ENCODE measurements at regions of chr2 and their contacts with region 1.

Region 1: GRCh38 chr2:234278556-234279255 is 218.2 kb downstream of the ARL4C start:
- DNase-seq: peak; percentile 31
- H3K4me3 Mint-ChIP-seq: peak overlapping the region; percentile 13
- H3K27ac Mint-ChIP-seq: peak overlapping the region; percentile 82
- H3K4me1 Mint-ChIP-seq: peaks cover 47% of the 10 kb centered on the region
- H3K27me3 Mint-ChIP-seq: no peaks in the 10 kb centered on the region

Region 2: DNA sequence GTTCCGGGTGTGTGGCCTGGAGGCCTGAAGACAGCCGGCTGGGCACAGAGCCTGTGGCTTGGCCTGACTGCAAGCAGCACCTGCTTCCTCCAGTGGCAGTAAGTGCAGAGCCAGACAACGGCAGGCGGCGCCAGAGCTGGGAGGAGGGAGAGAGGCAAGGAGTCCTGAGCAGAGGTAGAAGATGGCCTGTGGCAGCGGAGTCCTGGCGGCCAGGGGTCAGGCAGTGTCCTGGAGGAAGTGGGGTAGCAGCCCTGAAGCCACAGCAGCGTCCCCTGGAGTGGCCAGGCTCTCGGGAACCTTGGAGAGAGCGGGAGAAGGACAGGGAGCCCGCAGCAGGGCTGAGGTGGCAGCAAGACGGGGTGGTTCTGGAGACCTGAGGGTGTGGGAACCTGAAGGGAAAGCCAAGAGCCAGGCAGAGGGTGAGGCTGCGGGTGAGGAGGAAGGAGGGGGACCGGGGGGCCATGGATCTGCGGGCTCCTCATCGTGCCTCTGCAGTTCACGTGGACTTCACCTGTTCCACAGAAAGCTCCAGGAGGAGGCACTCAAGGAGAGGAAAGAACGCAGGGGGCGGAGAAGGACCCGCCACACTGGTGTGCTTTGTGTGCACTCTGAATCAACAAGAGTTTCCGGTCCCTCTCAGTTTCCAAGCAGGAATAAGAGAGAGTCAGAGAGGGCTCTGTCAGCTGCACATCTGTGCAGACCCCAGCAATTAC is 798.1 kb before region 1 on chr2:
- CTCF ChIA-PET with region 1: no interaction called
- POLR2A ChIA-PET with region 1: no interaction called
- intact Hi-C with region 1: no loop called
- DNase-seq: no peak
- H3K4me3 Mint-ChIP-seq: no peak overlapping the region
- H3K27ac Mint-ChIP-seq: no peak overlapping the region
- H3K4me1 Mint-ChIP-seq: no peaks in the 10 kb centered on the region
- H3K27me3 Mint-ChIP-seq: no peaks in the 10 kb centered on the region

Region 3: DNA sequence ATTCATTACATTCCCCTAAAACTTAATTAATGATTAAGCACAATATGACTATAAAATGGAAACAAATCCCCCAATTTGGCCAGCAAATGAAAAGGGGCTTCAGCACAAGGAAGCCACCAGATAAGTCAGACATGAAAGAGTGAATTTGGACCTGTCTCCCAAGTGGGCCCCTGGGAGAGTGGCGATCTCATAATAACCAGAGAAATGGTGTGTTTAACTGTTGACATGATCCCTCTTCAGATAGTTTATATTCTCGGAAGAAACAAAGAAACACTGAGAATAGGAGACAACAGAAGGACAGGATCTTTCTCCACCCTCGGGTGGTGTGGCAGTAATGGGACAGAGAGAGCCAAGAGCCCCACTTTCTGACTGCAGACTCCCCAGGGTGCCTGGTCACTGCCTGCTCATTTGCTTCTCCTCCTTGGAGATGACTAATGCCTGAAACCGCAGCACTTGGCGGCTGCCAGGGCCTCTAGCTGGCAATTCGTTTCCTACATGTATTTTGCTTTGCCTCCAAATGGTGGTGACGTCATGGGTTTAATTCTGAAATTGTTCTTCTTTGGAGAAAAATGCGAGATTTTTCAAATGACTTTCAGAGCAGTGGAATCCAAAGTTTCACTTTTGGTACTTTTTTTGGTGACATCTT is 274.6 kb before region 1 on chr2:
- CTCF ChIA-PET with region 1: no interaction called
- POLR2A ChIA-PET with region 1: no interaction called
- intact Hi-C with region 1: no loop called
- DNase-seq: peak; percentile 71
- H3K4me3 Mint-ChIP-seq: no peak overlapping the region
- H3K27ac Mint-ChIP-seq: no peak overlapping the region
- H3K4me1 Mint-ChIP-seq: peaks cover 38% of the 10 kb centered on the region
- H3K27me3 Mint-ChIP-seq: no peaks in the 10 kb centered on the region

Region 4: GRCh38 chr2:234241656-234242458 is 36.8 kb before region 1 on chr2:
- CTCF ChIA-PET with region 1: no interaction called
- POLR2A ChIA-PET with region 1: no interaction called
- intact Hi-C with region 1: no loop called
- DNase-seq: no peak
- H3K4me3 Mint-ChIP-seq: no peak overlapping the region
- H3K27ac Mint-ChIP-seq: no peak overlapping the region
- H3K4me1 Mint-ChIP-seq: peaks cover 10% of the 10 kb centered on the region
- H3K27me3 Mint-ChIP-seq: no peaks in the 10 kb centered on the region

Region 5: GRCh38 chr2:234257856-234258561 is 20.7 kb before region 1 on chr2:
- CTCF ChIA-PET with region 1: no interaction called
- POLR2A ChIA-PET with region 1: no interaction called
- intact Hi-C with region 1: loop called (anchors 2 kb)
- DNase-seq: peak; percentile 62
- H3K4me3 Mint-ChIP-seq: no peak overlapping the region
- H3K27ac Mint-ChIP-seq: no peak overlapping the region
- H3K4me1 Mint-ChIP-seq: peaks cover 19% of the 10 kb centered on the region
- H3K27me3 Mint-ChIP-seq: no peaks in the 10 kb centered on the region

Region 6: DNA sequence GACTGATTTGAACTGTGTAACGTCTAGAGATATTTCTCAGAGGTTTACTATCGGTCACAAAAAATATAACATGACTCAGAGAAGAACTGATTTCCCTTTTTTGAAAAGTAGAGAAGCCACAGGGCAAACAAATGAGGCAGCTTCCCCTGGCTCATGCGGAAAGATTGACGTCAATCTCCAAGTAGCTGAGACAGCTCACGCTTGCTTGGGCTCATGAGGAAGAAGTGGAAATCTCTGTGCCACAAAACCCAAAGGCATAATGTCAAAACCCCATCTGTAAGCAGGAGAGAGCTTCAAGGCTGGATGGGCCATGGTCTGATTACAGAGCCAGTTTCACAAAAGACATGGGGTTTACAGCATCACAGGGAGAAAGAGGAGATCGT is 30.1 kb after region 1 on chr2:
- CTCF ChIA-PET with region 1: interaction called, 3 read pairs
- POLR2A ChIA-PET with region 1: no interaction called
- intact Hi-C with region 1: loop called (anchors 1 kb)
- DNase-seq: peak; percentile 88
- H3K4me3 Mint-ChIP-seq: peak overlapping the region; percentile 38
- H3K27ac Mint-ChIP-seq: peak overlapping the region; percentile 89
- H3K4me1 Mint-ChIP-seq: peaks cover 56% of the 10 kb centered on the region
- H3K27me3 Mint-ChIP-seq: no peaks in the 10 kb centered on the region